Ovary (tissue), 10 donors: ENCODE measurements at regions of chr19 and their contacts with region 1.

Region 1: GRCh38 chr19:4968462-4969291 is at the start of gene KDM4B:
- DNase-seq: peak; percentile 99 to 100 (median 99)
- H3K4me3 ChIP-seq: peak within 1 kb of the TSS; percentile 71
- H3K27ac ChIP-seq: peak within 1 kb of the TSS; percentile 33 to 51
- H3K4me1 ChIP-seq: peaks cover 9% of the 10 kb centered on the region
- H3K27me3 ChIP-seq: no peaks in the 10 kb centered on the region
- CTCF ChIP-seq: no peak
- EP300 ChIP-seq: no peak
- POLR2A ChIP-seq: peak; percentile 87
- total RNA-seq, gene KDM4B: 21.6 to 62.9 (median 47.8) TPM

Region 2: GRCh38 chr19:4929186-4929585 is 39.5 kb before region 1 on chr19:
- intact Hi-C with region 1: loop called in 1 of 4 experiments (anchors 5 kb)
- DNase-seq: peak in 3 of 5 donors; percentile 33 to 61 (median 46)
- H3K4me3 ChIP-seq: no peak overlapping the region
- H3K27ac ChIP-seq: no peak overlapping the region
- H3K4me1 ChIP-seq: peaks cover 4% of the 10 kb centered on the region
- H3K27me3 ChIP-seq: no peaks in the 10 kb centered on the region
- CTCF ChIP-seq: no peak
- EP300 ChIP-seq: no peak
- POLR2A ChIP-seq: no peak